Head of caudate nucleus (tissue), 42 donors: ENCODE measurements at regions of chr3 and their contacts with region 1.

Region 1: DNA sequence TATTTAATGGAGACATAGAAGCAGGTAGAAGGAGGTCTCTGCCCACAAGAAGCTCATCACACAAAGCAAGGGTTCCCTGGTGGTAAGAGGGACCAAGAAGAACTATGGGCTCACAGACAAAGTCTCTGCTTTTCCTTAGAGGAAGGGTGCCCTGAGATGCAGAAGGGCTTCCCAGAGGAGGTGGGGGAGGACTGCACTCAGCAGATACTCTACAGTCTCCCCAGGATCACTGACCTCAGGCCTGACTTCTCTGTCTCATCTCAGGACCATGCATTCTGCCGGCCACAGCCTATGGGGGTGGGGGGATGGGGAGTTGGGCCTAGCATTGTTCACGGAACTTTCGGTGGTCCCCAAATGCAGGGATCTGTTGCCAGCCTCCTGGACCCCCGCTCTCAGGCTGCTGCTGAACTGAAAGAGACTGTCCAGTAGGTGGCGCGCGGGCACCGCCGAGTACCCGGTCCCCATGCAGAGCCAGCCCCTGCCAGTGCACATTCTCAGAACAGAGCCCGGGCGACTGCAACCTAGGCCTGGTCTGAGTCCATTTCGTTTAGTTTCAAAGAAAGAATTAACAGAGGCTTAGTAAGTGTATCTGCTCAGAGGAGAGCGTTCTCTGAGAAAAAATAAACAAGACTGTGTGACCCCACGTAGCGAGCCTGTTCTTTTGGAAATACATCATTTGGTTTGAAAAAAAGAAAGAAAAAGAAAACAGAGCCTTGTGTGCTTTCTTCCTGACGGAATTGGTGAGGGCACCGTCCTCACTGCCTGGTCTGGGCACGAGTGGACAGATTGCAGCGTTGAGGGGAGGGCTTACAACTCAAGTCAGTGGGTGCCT is 74.1 kb downstream of the LRTM1 start:
- DNase-seq: peak; percentile 76 to 95 (median 90)

Region 2: GRCh38 chr3:54822206-54822605 is 31.6 kb before region 1 on chr3:
- intact Hi-C with region 1: no loop called
- DNase-seq: peak in 31 of 42 donors; percentile 8 to 73 (median 36)

Region 3: GRCh38 chr3:55059027-55059629 is 205.3 kb after region 1 on chr3:
- intact Hi-C with region 1: no loop called
- DNase-seq: no peak

Region 4: GRCh38 chr3:55160241-55160983 is 306.6 kb after region 1 on chr3:
- intact Hi-C with region 1: loop called (anchors 10 kb)
- DNase-seq: peak in 2 of 42 donors; percentile 11 to 28